Pancreas (tissue), 10 donors: ENCODE measurements at regions of chr6 and their contacts with region 1.

Region 1: GRCh38 chr6:7589949-7590917 is at the start of gene SNRNP48:
- DNase-seq: peak; percentile 92 to 96 (median 94)
- ATAC-seq: peak; percentile 92 to 99 (median 98)
- H3K4me3 ChIP-seq: peak within 1 kb of the TSS; percentile 86 to 97 (median 93)
- H3K27ac ChIP-seq: peak within 1 kb of the TSS; percentile 49 to 65 (median 64)
- H3K4me1 ChIP-seq: peaks cover 0 to 30% (median 16%) of the 10 kb centered on the region in 3 donors
- H3K27me3 ChIP-seq: no peaks in the 10 kb centered on the region
- CTCF ChIP-seq: no peak
- total RNA-seq, gene SNRNP48: 3.7 to 8.1 (median 4.8) TPM

Region 2: DNA sequence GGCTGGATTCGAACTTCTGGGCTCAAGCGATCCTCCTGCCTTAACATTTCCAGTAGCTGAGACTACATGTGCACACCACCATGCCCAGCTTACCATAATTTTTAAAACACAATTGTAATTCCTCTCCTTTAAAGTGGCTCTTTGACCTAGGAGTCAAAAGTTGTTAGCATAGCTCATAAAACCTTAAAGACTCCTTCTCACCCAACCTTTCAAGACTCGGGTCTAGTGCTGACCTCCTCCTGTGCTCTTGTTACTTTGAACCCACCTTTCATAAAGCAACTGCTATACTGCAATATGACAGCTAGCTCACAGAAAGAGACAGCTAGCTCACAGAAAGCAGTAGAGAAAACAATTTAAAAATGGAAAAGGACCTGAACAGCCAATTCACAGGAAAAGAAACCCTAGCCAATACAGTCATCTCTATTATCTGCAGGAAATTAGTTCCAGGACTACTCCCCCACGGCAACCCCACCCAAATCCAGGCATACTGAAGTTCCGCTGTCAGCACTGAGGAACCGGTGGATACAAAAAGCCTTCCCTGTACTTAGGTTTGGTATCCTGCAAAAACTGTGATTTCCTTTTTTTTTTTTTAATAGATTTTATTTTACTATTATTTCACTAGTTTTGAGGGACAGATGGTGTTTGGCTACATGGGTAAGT is 297.5 kb before region 1 on chr6:
- intact Hi-C with region 1: loop called in 1 of 3 experiments (anchors 10 kb)
- DNase-seq: no peak
- ATAC-seq: no peak
- H3K4me3 ChIP-seq: no peak overlapping the region
- H3K27ac ChIP-seq: no peak overlapping the region
- H3K4me1 ChIP-seq: no peaks in the 10 kb centered on the region
- H3K27me3 ChIP-seq: no peaks in the 10 kb centered on the region
- CTCF ChIP-seq: no peak

Region 3: DNA sequence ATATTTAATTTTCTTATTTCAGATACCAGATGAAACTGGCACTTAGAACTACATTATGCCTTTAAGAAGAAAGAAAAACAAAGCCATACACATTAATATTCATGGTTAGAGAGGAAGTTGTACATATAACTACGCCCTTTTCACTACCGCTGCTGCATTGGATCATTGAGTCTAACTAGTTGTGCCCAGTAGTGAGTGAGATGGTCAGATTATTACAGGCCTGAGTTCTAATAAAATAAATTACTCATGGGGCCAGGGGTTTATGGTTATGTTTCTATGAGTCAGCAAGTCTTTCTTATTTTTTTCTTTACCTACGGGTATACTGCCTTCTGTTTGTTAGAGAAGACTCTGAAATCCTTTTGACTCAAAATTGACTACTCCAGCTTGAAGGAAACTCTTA is 189.2 kb before region 1 on chr6:
- intact Hi-C with region 1: loop called in 1 of 3 experiments (anchors 10 kb)
- DNase-seq: no peak
- ATAC-seq: no peak
- H3K4me3 ChIP-seq: no peak overlapping the region
- H3K27ac ChIP-seq: no peak overlapping the region
- H3K4me1 ChIP-seq: no peaks in the 10 kb centered on the region
- H3K27me3 ChIP-seq: no peaks in the 10 kb centered on the region
- CTCF ChIP-seq: no peak

Region 4: DNA sequence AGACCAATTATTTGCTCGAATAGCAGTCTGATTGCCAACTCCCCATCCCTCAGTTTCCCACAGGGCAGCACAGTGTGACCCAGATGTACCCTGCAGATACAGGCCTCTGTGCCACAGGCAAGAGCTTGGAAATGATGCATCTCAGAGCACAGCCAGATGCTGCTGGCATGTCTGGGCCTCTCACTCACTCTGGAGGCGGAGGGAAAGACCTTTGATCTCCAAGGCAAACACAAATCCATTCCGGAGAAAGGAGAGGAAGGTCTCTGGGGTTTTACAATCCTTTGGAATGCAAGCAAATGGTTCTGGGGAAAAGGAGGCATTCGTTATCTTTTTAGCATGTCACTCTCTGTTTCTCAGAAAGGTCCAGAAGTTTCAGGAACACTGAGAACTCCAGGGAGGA is 126.4 kb before region 1 on chr6:
- intact Hi-C with region 1: no loop called
- DNase-seq: no peak
- ATAC-seq: peak in 2 of 4 donors; percentile 37 to 48
- H3K4me3 ChIP-seq: no peak overlapping the region
- H3K27ac ChIP-seq: no peak overlapping the region
- H3K4me1 ChIP-seq: no peaks in the 10 kb centered on the region
- H3K27me3 ChIP-seq: no peaks in the 10 kb centered on the region
- CTCF ChIP-seq: no peak